ENCODE measurements at regions of chr10 and their contacts with region 1.

Region 1: GRCh38 chr10:129416956-129417765 is 49.9 kb upstream of the MGMT start:
- DNase-seq: peak; percentile 59
- H3K4me3 ChIP-seq: no peak overlapping the region
- H3K27ac ChIP-seq: peak overlapping the region; percentile 62
- H3K4me1 ChIP-seq: peaks cover 17% of the 10 kb centered on the region
- H3K27me3 ChIP-seq: no peaks in the 10 kb centered on the region
- CTCF ChIP-seq: no peak
- POLR2A ChIP-seq: no peak

Region 2: DNA sequence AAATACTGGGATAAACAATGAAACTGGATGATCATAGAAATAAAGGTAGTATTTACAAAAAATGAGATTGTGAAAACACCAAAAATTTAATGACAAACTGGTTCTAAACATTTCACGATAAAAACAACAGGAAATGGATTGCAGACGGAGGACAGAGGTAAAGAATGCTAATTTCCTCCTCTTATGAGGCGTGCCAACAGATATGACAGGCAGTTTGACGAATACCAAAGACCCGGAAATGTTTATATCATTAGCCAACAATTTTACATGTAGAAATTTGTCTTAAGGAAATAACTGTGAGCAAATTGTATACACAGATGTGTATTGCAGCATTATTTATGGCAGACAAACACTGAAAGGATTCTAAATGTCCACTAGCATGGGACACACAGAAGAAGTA is 112.1 kb before region 1 on chr10:
- CTCF ChIA-PET with region 1: no interaction called
- POLR2A ChIA-PET with region 1: no interaction called
- dilution Hi-C with region 1: no loop called
- intact Hi-C with region 1: loop called (anchors 1 kb)
- DNase-seq: peak; percentile 73
- H3K4me3 ChIP-seq: peak overlapping the region in 1 of 3 experiments; percentile 7
- H3K27ac ChIP-seq: peak overlapping the region; percentile 61
- H3K4me1 ChIP-seq: peaks cover 14% of the 10 kb centered on the region
- H3K27me3 ChIP-seq: no peaks in the 10 kb centered on the region
- CTCF ChIP-seq: no peak
- POLR2A ChIP-seq: no peak

Region 3: DNA sequence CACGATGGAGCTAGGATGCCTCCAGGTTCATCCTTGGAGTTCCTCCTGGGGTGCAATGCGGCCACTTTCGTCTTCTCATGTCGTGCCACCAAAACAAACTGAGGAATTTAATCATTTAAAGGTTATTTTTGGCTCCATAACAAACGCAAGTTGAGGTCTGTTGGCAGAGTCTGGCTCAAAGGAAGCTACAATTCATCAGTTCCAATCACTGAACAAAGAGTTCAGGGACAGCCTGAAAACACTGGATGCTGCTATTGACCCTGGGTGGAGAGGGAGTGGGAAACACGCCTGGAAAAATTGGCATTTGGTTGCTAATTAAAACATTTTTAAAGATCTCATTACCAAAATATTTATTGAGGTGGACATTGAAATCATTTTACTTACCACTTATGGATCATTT is 38.5 kb after region 1 on chr10:
- CTCF ChIA-PET with region 1: no interaction called
- POLR2A ChIA-PET with region 1: no interaction called
- dilution Hi-C with region 1: no loop called
- intact Hi-C with region 1: no loop called
- DNase-seq: no peak
- H3K4me3 ChIP-seq: no peak overlapping the region
- H3K27ac ChIP-seq: no peak overlapping the region
- H3K4me1 ChIP-seq: no peaks in the 10 kb centered on the region
- H3K27me3 ChIP-seq: peaks cover 0 to 27% of the 10 kb centered on the region in 2 experiments
- CTCF ChIP-seq: no peak
- POLR2A ChIP-seq: no peak

Region 4: GRCh38 chr10:129466703-129467358 is 49.7 kb after region 1 on chr10 and contains the start of gene MGMT:
- CTCF ChIA-PET with region 1: no interaction called
- POLR2A ChIA-PET with region 1: no interaction called
- dilution Hi-C with region 1: no loop called
- intact Hi-C with region 1: loop called (anchors 1 kb)
- DNase-seq: peak; percentile 50
- H3K4me3 ChIP-seq: peak within 1 kb of the TSS; percentile 34 to 64 (median 63)
- H3K27ac ChIP-seq: peak within 1 kb of the TSS; percentile 25
- H3K4me1 ChIP-seq: peaks cover 10% of the 10 kb centered on the region
- H3K27me3 ChIP-seq: no peaks in the 10 kb centered on the region
- CTCF ChIP-seq: no peak
- POLR2A ChIP-seq: peak; percentile 61
- total RNA-seq, gene MGMT: 11.1 and 15.0 TPM in 2 replicates

Region 5: DNA sequence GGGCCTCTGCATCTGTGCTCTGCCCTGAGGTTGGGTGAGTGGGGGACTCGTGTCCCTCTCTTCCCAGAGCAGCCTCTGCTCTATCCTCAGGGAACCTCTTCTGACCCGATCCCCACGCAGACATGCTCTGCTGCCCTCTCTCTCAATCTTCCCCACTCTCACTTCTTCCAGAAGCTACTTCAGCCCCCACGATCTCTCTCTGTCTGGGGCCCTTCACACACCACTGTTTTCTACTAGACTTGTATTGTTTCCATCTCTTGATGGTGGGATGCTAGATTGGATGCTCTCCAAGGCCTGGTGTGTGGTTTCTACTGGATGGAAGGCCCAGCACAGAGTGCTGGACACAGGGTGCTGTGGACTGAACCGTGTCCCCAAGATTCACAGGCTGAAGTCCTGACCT is 59.9 kb after region 1 on chr10:
- CTCF ChIA-PET with region 1: no interaction called
- POLR2A ChIA-PET with region 1: no interaction called
- dilution Hi-C with region 1: no loop called
- intact Hi-C with region 1: no loop called
- DNase-seq: no peak
- H3K4me3 ChIP-seq: no peak overlapping the region
- H3K27ac ChIP-seq: no peak overlapping the region
- H3K4me1 ChIP-seq: no peaks in the 10 kb centered on the region
- H3K27me3 ChIP-seq: no peaks in the 10 kb centered on the region
- CTCF ChIP-seq: no peak
- POLR2A ChIP-seq: no peak

Region 6: DNA sequence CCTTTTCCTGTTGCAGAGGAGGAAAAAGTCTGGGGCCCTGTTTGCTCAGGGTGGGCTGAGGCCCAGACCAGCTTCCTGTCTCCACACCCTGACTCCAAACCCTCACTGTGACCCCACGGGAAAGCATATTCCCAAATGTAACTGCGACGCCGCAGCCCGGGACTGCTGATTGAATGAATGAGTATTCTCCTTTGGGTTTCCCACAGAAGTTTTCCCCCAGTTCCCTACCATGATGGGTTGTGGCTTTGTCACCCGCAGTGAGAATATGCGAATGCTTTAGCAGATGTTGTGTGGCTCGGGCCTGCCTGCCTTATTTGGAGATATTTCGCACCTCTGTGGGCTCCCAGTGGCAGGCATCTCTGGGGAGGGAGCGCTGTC is 100.5 kb after region 1 on chr10:
- CTCF ChIA-PET with region 1: no interaction called
- POLR2A ChIA-PET with region 1: no interaction called
- dilution Hi-C with region 1: no loop called
- intact Hi-C with region 1: no loop called
- DNase-seq: no peak
- H3K4me3 ChIP-seq: no peak overlapping the region
- H3K27ac ChIP-seq: no peak overlapping the region
- H3K4me1 ChIP-seq: no peaks in the 10 kb centered on the region
- H3K27me3 ChIP-seq: no peaks in the 10 kb centered on the region
- CTCF ChIP-seq: no peak
- POLR2A ChIP-seq: no peak

Region 7: DNA sequence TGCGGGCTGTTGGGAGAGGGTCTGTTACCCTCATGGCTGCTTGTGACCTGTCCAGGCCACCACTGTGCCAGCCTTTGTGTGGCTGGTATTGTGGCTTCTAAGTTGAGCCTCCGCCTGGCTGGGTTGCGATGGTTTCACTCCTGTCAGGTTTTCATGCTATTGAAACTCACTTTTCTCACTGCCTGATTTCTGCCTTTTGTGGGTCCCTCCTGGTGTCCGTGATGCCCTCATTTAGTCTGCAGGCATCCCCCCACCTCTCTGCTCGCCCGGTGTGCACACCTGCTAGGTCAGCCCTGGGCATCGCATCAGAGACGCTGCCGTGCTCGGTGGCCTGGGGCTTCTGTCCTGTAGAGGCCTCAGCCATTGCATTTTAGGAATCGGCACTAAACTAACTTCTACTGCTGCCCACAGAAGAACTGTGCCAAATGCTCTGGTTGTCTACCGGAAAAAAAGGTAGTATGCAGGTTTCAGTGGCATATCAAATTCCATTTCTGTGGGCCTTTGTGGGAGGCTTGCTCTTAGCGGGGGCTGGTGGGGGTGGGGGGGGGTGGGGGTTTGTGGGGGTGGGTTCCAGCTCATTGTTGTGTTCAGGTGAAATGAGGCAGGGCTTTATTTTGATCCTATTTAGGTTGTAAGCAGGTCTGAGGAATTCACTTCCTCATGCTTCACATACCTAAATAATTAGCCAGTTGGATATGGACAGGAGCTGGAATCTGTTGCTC is 114.2 kb after region 1 on chr10:
- CTCF ChIA-PET with region 1: no interaction called
- POLR2A ChIA-PET with region 1: no interaction called
- dilution Hi-C with region 1: no loop called
- intact Hi-C with region 1: loop called (anchors 5 kb)
- DNase-seq: no peak
- H3K4me3 ChIP-seq: no peak overlapping the region
- H3K27ac ChIP-seq: no peak overlapping the region
- H3K4me1 ChIP-seq: no peaks in the 10 kb centered on the region
- H3K27me3 ChIP-seq: no peaks in the 10 kb centered on the region
- CTCF ChIP-seq: no peak
- POLR2A ChIP-seq: no peak

Region 8: GRCh38 chr10:129963641-129964501 is 546.7 kb after region 1 on chr10 and contains the start of gene EBF3:
- CTCF ChIA-PET with region 1: no interaction called
- POLR2A ChIA-PET with region 1: no interaction called
- dilution Hi-C with region 1: no loop called
- intact Hi-C with region 1: loop called (anchors 1 kb)
- DNase-seq: peak; percentile 48
- H3K4me3 ChIP-seq: peak within 1 kb of the TSS; percentile 35 to 59 (median 38)
- H3K27ac ChIP-seq: peak within 1 kb of the TSS; percentile 21
- H3K4me1 ChIP-seq: peaks cover 9% of the 10 kb centered on the region
- H3K27me3 ChIP-seq: peaks cover 67 to 89% of the 10 kb centered on the region in 2 experiments
- CTCF ChIP-seq: no peak
- POLR2A ChIP-seq: no peak
- total RNA-seq, gene EBF3: 2.0 and 2.7 TPM in 2 replicates

Measured in endothelial cell of umbilical vein (primary cell).